MCF 10A (cell line): ENCODE measurements at regions of chr14 and their contacts with region 1.

Region 1: DNA sequence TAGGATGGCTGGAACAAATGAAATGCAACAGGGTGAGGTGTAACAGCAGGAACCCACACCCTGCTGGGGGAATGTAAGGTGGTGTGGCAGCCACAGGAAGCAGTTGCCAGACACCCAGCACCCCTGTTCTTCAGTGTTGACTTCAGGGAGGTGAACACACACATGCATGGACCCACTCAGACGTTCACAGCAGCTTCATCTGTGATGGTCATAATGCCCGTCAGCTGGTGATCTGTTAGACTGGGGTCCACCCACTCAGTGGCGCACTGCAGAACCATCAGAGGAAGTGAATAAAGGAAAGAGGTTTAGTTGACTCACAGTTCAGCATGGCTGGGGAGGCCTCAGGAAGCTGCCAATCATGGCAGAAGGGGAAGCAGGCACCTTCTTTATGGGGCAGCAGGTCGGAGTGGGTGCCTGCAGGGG is 22.7 kb upstream of the TEX22 start:
- DNase-seq: no peak
- H3K4me3 Mint-ChIP-seq: no peak overlapping the region
- H3K27ac Mint-ChIP-seq: no peak overlapping the region
- H3K4me1 Mint-ChIP-seq: no peaks in the 10 kb centered on the region
- H3K27me3 Mint-ChIP-seq: no peaks in the 10 kb centered on the region
- CTCF ChIP-seq: no peak

Region 2: GRCh38 chr14:105391541-105391940 is 15.9 kb after region 1 on chr14:
- CTCF ChIA-PET with region 1: no interaction called
- POLR2A ChIA-PET with region 1: no interaction called
- intact Hi-C with region 1: no loop called
- DNase-seq: no peak
- H3K4me3 Mint-ChIP-seq: no peak overlapping the region
- H3K27ac Mint-ChIP-seq: no peak overlapping the region
- H3K4me1 Mint-ChIP-seq: no peaks in the 10 kb centered on the region
- H3K27me3 Mint-ChIP-seq: no peaks in the 10 kb centered on the region
- CTCF ChIP-seq: no peak

Region 3: DNA sequence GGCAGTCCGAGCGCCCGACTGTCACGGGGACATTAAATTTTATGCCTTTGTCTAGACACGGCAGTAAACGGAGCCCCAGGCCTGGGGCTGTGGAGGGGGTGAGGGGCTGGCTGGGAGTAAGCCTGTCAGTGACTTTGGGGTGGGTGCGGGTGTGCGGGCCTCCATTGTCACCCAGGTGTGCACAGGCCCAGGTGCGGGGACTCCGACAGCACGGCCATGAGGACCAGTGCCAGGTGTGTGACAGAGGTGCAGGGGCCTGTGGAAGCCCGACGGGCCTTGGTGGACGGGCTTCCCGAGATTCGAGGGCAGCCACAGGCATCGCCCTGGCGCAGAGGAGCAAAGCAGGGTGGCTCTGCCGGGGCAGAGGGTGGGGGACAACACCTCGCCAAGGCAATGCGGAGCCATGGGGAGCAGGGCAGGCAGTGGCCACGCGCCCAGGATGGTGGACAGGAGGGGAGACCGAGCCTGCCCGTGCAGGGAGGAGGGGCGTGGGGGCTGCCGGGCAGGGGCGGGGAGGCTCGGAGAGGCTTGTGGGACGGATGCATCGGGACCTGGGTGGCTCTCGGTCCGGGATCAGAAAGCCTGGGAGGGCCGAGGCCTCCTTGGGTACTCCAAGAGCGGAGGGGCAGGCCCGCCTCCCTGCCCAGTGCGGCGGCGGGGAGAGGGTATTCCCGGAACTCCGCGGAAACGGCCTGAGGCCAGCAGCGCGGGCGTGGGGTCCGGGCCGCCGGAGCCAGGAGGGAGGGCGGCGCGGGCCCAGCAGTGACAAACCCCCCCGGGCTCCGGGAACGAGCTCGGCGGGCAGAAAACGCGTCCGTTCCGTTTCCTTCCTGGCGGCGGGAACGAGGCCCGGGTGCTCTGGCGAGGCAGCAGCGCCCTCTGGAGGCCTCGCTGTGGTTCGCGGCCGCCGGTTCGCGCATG is 152.3 kb after region 1 on chr14:
- CTCF ChIA-PET with region 1: interaction called, 8 read pairs
- POLR2A ChIA-PET with region 1: no interaction called
- intact Hi-C with region 1: loop called (anchors 5 kb)
- DNase-seq: peak; percentile 69
- H3K4me3 Mint-ChIP-seq: peak overlapping the region; percentile 65
- H3K27ac Mint-ChIP-seq: no peak overlapping the region
- H3K4me1 Mint-ChIP-seq: no peaks in the 10 kb centered on the region
- H3K27me3 Mint-ChIP-seq: peaks cover 6% of the 10 kb centered on the region
- CTCF ChIP-seq: peak; percentile 91